Aorta (tissue), 5 donors: ENCODE measurements at regions of chr4 and their contacts with region 1.

Region 1: GRCh38 chr4:76430519-76431388 is 4.3 kb upstream of the SHROOM3 start:
- DNase-seq: no peak
- ATAC-seq: no peak
- H3K4me3 ChIP-seq: no peak overlapping the region
- H3K27ac ChIP-seq: no peak overlapping the region
- H3K4me1 ChIP-seq: peaks cover 0 to under 1% of the 10 kb centered on the region in 2 donors
- H3K27me3 ChIP-seq: no peaks in the 10 kb centered on the region

Region 2: GRCh38 chr4:76179398-76180318 is 251.1 kb before region 1 on chr4:
- intact Hi-C with region 1: loop called (anchors 5 to 10 kb)
- DNase-seq: peak; percentile 90 to 95
- ATAC-seq: peak; percentile 89
- H3K4me3 ChIP-seq: no peak overlapping the region
- H3K27ac ChIP-seq: no peak overlapping the region
- H3K4me1 ChIP-seq: no peaks in the 10 kb centered on the region
- H3K27me3 ChIP-seq: no peaks in the 10 kb centered on the region

Region 3: DNA sequence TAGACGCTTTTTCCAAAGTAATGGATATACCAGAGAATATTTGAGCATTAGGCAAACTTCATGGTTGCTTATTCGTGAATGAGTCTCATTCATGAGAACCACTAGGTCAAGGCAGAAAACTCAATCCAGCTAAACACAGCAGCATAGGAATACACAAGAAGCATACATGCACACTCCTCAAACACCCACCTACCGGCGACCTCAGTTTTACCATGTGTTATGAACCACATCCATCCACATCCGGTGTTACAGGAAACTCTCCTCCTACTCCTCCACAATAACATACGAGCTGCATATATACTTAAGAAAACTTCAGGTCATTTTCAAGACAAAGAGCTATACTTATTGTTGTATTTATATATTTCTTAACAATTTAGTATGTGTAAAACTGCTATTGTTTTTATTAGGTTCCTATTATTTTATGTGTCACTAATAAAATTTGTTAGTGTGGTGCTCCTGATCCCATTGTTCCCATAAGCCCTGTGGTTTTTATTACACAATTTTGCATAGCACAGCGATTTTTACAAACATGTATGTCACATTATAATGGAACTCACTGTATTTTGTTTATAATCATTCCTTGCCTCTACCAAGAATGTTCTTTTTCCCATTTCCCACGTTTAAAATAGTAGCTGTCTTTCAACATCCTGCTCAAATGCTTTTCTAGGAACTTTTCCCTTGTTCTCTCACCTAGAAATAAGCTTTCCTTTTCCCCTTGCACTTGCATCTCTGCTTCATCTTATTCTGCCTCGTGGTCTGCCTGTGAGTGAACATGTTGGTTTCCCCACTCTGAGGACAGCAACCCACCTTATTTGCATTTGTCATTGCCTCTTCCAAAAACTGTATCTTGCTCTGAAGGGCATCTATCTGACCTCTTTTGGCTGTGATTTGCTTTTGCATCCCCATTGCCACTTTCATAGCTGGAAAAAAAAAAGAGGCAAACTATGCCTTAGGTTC is 76.0 kb before region 1 on chr4:
- intact Hi-C with region 1: no loop called
- DNase-seq: no peak
- ATAC-seq: no peak
- H3K4me3 ChIP-seq: no peak overlapping the region
- H3K27ac ChIP-seq: no peak overlapping the region
- H3K4me1 ChIP-seq: no peaks in the 10 kb centered on the region
- H3K27me3 ChIP-seq: no peaks in the 10 kb centered on the region

Region 4: GRCh38 chr4:76470064-76470463 is 39.3 kb after region 1 on chr4:
- intact Hi-C with region 1: no loop called
- DNase-seq: no peak
- ATAC-seq: no peak
- H3K4me3 ChIP-seq: no peak overlapping the region
- H3K27ac ChIP-seq: no peak overlapping the region
- H3K4me1 ChIP-seq: no peaks in the 10 kb centered on the region
- H3K27me3 ChIP-seq: no peaks in the 10 kb centered on the region

Region 5: GRCh38 chr4:76499461-76499860 is 68.7 kb after region 1 on chr4:
- intact Hi-C with region 1: loop called (anchors 2 kb)
- DNase-seq: no peak
- ATAC-seq: no peak
- H3K4me3 ChIP-seq: no peak overlapping the region
- H3K27ac ChIP-seq: no peak overlapping the region
- H3K4me1 ChIP-seq: no peaks in the 10 kb centered on the region
- H3K27me3 ChIP-seq: no peaks in the 10 kb centered on the region

Region 6: GRCh38 chr4:76504613-76505465 is 74.1 kb after region 1 on chr4:
- intact Hi-C with region 1: loop called (anchors 2 kb)
- DNase-seq: no peak
- ATAC-seq: peak; percentile 68
- H3K4me3 ChIP-seq: no peak overlapping the region
- H3K27ac ChIP-seq: no peak overlapping the region
- H3K4me1 ChIP-seq: no peaks in the 10 kb centered on the region
- H3K27me3 ChIP-seq: no peaks in the 10 kb centered on the region

Region 7: GRCh38 chr4:76758290-76758882 is 327.6 kb after region 1 on chr4:
- intact Hi-C with region 1: loop called (anchors 5 kb)
- DNase-seq: no peak
- ATAC-seq: peak; percentile 74
- H3K4me3 ChIP-seq: no peak overlapping the region
- H3K27ac ChIP-seq: peak overlapping the region in 1 of 2 donors; percentile 70
- H3K4me1 ChIP-seq: peaks cover 0 to 4% of the 10 kb centered on the region in 2 donors
- H3K27me3 ChIP-seq: no peaks in the 10 kb centered on the region

Region 8: DNA sequence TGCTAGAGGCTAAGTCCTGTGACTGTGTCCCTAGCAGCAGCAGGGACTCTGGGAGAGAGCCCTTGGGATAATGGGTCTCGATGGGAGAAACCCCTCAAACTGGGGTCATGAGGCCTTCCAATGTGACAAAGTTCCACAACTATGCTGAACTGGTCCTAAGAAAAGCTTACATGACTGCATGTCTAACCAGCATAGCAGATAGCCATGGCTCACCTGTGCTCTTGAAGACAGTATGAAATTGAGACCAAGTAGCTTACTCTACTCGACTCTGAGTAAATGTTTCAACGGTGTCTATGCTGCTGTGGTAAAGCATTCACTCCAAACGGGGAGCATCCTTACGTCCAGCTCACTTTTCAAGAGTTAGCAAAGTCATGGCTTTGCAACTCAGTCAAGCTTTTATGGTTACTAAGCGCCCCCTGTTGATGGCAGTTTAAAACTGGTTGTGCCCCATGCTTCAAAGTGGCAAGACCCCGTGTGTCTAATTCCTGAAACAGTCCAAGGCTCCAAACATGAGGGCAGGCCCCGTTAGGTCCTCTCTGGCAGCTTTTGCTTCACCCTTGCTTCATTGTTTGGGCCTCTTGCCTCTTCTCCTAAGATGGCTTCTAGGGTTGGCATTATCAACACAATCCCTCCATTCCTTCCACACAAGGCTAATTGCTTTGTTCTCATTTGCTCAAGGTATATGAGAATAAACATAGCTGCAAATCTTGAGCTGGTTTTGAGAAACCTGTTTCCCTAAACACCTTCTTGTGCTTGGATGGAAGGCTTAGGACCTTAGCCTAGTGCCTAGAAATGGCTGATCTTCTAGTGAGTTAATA is 772.8 kb after region 1 on chr4:
- intact Hi-C with region 1: loop called in 1 of 2 experiments (anchors 5 kb)
- DNase-seq: peak in 1 of 2 donors; percentile 59
- ATAC-seq: peak; percentile 68
- H3K4me3 ChIP-seq: no peak overlapping the region
- H3K27ac ChIP-seq: no peak overlapping the region
- H3K4me1 ChIP-seq: no peaks in the 10 kb centered on the region
- H3K27me3 ChIP-seq: no peaks in the 10 kb centered on the region